ENCODE measurements at regions of chr10 and their contacts with region 1.

Region 1: DNA sequence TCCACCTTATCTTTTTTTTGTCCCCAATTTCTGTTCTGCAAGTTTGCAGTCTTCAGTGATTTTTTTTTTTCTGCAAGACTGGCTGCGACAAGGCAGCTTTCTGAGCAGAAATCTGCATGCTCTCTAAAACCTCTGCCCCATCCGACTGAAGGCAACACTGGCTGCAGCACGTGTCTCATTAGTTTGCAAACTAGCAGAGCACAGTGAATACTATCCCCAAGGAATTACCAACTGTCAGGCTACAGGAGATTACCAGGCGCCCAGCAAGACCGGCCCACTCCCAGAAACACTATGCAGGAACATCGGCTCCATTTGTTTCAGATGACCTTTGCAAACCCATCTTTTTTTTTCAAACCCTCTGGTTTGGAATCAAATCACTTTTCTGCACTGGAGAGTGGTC is 538.8 kb downstream of the SORCS1 start:
- DNase-seq: no peak
- CTCF ChIP-seq: no peak

Region 2: DNA sequence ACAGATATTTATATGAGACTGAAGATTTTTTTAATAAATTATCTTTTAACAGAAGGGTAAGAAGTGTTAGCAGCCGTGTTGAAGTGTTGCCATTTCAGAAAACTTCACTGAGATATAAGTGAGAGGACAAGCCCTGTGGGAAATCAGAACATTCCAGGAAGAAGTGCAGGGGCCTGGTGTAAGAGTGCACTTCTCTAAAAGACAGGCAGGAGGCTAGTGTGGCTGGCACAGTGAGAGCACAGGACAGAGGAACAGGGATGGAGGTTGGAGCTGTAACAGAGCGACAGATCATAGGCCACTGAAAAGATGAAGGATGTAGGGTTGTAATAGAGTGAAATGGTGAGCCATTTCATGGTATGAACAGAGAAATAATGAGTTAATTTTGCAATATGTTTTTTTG is 70.2 kb before region 1 on chr10:
- CTCF ChIA-PET with region 1: no interaction called
- POLR2A ChIA-PET with region 1: no interaction called
- DNase-seq: no peak
- CTCF ChIP-seq: no peak

Region 3: DNA sequence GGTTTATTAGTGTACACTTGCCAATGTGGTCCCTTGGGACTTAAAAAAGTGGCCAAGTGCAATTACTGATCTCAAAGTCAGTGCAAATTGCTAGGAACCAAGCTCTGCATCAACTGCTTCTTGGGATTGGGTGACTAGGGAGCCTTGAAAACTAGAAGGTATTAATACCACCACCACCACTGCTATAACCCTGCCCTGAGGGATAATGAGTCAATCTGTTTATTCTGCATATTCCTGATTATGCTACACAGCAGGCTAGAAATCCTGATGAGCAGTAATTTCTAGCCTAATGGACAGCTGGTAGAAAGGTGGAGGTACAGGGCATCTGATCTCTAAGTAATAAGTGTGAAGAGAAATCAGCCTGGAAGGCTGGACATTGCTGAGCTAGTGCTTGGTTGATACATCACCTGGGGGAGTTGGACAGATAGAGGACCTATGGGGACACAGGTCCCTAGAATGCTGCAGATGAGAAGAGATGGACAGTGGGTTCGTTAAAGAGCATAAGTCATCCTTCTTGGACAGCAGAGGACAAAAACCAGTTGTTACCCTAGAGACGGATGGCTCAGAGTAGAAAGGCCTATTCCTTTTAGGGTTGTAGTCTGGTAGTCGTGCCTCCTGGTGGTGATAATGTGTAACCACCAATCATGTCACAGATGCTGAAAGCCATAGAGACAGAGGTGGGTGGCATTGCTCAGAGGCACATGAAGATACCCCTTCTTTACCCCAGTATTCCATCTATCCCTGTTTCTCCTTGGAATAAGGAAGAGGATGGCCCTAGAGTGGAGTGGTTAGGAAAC is 16.1 kb before region 1 on chr10:
- CTCF ChIA-PET with region 1: interaction called, 22 read pairs
- POLR2A ChIA-PET with region 1: interaction called, 9 read pairs
- DNase-seq: no peak
- CTCF ChIP-seq: no peak

Region 4: GRCh38 chr10:106637873-106638272 is 12.1 kb after region 1 on chr10:
- CTCF ChIA-PET with region 1: interaction called, 10 read pairs
- POLR2A ChIA-PET with region 1: no interaction called
- DNase-seq: no peak
- CTCF ChIP-seq: no peak

Region 5: GRCh38 chr10:106643473-106643872 is 17.7 kb after region 1 on chr10:
- CTCF ChIA-PET with region 1: interaction called, 14 read pairs
- POLR2A ChIA-PET with region 1: no interaction called
- DNase-seq: no peak
- CTCF ChIP-seq: no peak

Region 6: DNA sequence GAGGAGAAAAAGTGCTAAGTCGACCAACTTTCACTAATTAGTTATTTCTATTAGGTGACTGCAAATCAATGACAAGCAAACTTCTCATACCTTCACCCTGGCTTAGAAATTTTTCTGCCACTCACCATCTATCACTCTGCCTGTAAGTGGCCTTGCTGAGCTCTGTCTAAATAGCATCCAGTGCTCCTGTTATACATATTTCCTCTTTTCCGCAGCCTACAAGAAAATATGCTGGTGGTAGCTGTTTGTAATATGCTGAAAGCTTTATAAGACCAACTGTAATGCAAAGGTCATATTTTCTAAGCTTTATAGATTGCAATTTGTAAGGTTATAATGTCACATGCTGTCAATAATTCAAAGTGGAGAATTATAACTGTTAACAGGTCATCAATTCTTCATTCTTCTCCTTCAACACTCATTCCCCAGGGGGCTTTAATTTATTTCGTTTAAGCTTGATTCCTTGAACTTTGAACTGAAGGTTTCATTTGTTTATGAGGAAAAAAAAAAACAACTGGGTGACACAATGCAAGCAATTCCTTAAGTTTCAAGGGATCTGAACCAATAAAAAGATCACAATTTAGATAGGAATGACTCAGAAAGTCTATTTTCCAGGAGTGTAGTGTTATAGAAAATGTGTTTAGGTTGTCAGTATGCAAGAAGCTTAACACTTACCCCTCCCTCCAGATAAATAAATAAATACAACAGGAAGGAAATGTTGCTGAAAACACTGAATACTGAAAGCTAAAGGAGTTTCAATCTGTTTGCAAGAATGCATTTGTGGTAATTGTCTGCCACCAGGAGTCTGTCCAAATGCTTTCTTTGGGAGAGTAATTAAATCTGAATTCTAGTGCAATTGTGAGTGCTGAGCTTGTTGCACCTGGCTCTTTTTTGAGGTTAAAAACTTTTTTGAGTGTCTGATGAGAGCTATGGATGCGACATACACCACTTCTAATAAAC is 355.0 kb after region 1 on chr10:
- CTCF ChIA-PET with region 1: no interaction called
- POLR2A ChIA-PET with region 1: no interaction called
- DNase-seq: no peak
- CTCF ChIP-seq: peak; percentile 31

Measured in GM10248 (cell line).